Kidney (tissue), 22 donors: ENCODE measurements at regions of chr11 and their contacts with region 1.

Region 1: GRCh38 chr11:82719361-82720105 is 14.1 kb downstream of the FAM181B start:
- DNase-seq: no peak
- H3K4me3 ChIP-seq: no peak overlapping the region
- H3K27ac ChIP-seq: no peak overlapping the region
- H3K4me1 ChIP-seq: no peaks in the 10 kb centered on the region
- H3K27me3 ChIP-seq: no peaks in the 10 kb centered on the region
- CTCF ChIP-seq: no peak

Region 2: GRCh38 chr11:82858556-82859091 is 139.1 kb after region 1 on chr11:
- intact Hi-C with region 1: loop called (anchors 10 kb)
- DNase-seq: peak in 2 of 5 donors; percentile 28 to 38
- H3K4me3 ChIP-seq: no peak overlapping the region
- H3K27ac ChIP-seq: peak overlapping the region in 1 of 2 donors; percentile 15
- H3K4me1 ChIP-seq: peaks cover 0 to 4% (median 3%) of the 10 kb centered on the region in 3 donors
- H3K27me3 ChIP-seq: no peaks in the 10 kb centered on the region
- CTCF ChIP-seq: no peak